ENCODE measurements at regions of chr13 and their contacts with region 1.

Region 1: DNA sequence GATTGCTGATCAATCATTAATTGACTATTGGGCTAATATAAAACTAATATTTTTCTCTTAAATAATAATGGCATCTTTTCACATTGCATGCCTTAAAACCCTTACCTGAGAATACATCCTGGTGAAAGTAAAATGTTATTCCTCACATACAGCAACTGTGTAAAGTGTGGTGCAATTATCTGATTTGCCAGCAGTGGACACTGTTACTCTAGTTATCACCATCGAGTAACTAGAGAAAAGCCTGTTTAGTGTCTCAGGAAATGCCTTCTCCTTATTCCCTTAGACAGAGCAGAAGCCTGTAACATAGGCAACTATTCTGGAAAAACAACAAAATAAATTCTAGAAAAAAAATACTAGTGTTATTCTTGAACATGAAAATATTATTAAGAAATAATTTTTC is 459.8 kb downstream of the FGF14 start:
- DNase-seq: peak; percentile 54
- ATAC-seq: peak; percentile 87
- H3K4me3 ChIP-seq: no peak overlapping the region
- H3K27ac ChIP-seq: no peak overlapping the region
- H3K4me1 ChIP-seq: no peaks in the 10 kb centered on the region
- H3K27me3 ChIP-seq: peaks cover 33% of the 10 kb centered on the region
- CTCF ChIP-seq: peak; percentile 57

Region 2: GRCh38 chr13:101144808-101145419 is 797.1 kb before region 1 on chr13:
- CTCF ChIA-PET with region 1: no interaction called
- POLR2A ChIA-PET with region 1: no interaction called
- intact Hi-C with region 1: loop called (anchors 1 kb)
- DNase-seq: peak; percentile 74
- ATAC-seq: peak; percentile 68
- H3K4me3 ChIP-seq: no peak overlapping the region
- H3K27ac ChIP-seq: no peak overlapping the region
- H3K4me1 ChIP-seq: peaks cover 22% of the 10 kb centered on the region
- H3K27me3 ChIP-seq: no peaks in the 10 kb centered on the region
- CTCF ChIP-seq: peak; percentile 70

Region 3: GRCh38 chr13:102141625-102142472 is 199.8 kb after region 1 on chr13:
- CTCF ChIA-PET with region 1: no interaction called
- POLR2A ChIA-PET with region 1: no interaction called
- intact Hi-C with region 1: loop called (anchors 5 kb)
- DNase-seq: peak; percentile 39
- ATAC-seq: peak; percentile 31; the same call in 1 of the 2 replicates
- H3K4me3 ChIP-seq: no peak overlapping the region
- H3K27ac ChIP-seq: no peak overlapping the region
- H3K4me1 ChIP-seq: no peaks in the 10 kb centered on the region
- H3K27me3 ChIP-seq: peaks cover 9% of the 10 kb centered on the region; the same call in 1 of the 2 replicates
- CTCF ChIP-seq: peak; percentile 72

Measured in PC-3 (cell line).